Activated T-helper 1 cell treated with anti-CD3 and anti-CD28 coated beads, Interleukin-12 subunit alpha, Interleukin-12 subunit beta, Interleukin-2, Interleukin-4 antibody, amounts not matched to agents 30 ng/mL and 10 ng/mL and 1 ng/mL, durations not matched to agents 14 hours and 24 hours and 36 hours (primary cell): ENCODE measurements at regions of chr15 and their contacts with region 1.

Region 1: GRCh38 chr15:94582369-94582768 is 351.0 kb downstream of the MCTP2 start:
- DNase-seq: peak; percentile 48
- H3K4me3 Mint-ChIP-seq: no peak overlapping the region
- H3K27ac Mint-ChIP-seq: no peak overlapping the region
- H3K4me1 Mint-ChIP-seq: peaks cover 64% of the 10 kb centered on the region
- H3K27me3 Mint-ChIP-seq: peaks cover 61% of the 10 kb centered on the region

Region 2: DNA sequence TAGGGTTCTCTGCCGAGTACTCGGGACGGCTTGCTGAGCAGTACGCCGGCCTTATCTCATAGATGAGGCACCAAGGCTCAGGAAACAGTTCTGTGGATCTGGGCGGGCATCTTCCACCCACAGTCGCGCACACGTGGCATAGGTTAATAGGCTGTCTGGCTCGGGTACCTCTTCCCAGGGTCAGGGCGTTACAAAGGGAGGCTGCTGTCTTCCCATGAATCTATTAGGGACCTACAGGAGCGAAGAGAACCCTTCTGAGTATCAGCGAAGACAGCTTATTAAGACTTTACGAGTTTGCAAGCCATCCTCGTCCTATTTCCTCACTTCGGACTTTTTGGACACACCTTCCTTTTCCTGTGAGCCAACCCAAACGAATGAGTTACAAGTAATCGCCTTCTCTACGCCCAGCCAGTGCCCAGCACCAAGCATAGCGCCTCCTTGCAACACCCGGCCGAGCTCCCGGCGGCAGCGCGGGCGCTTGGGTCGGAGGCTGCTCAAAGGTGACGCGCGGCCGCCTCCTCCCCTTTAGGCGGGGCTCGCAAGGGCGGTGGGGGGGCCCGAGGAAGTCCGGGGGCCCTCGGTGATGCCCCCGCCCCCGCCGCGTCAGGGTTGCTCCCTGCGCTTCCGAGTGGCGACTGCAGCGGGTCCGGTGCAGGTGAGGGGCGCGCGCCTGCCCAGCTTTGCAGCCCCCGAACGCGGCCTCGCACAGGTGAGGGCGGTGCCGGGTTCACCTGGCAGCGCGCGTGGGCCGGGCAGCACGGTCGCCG is 351.2 kb before region 1 on chr15 and contains the start of gene MCTP2:
- intact Hi-C with region 1: loop called (anchors 2 kb)
- DNase-seq: peak; percentile 86
- H3K4me3 Mint-ChIP-seq: peak within 1 kb of the TSS; percentile 88
- H3K27ac Mint-ChIP-seq: peak within 1 kb of the TSS; percentile 99
- H3K4me1 Mint-ChIP-seq: peaks cover 87% of the 10 kb centered on the region
- H3K27me3 Mint-ChIP-seq: no peaks in the 10 kb centered on the region
- total RNA-seq, gene MCTP2: 93.2 and 96.0 TPM in 2 replicates

Region 3: DNA sequence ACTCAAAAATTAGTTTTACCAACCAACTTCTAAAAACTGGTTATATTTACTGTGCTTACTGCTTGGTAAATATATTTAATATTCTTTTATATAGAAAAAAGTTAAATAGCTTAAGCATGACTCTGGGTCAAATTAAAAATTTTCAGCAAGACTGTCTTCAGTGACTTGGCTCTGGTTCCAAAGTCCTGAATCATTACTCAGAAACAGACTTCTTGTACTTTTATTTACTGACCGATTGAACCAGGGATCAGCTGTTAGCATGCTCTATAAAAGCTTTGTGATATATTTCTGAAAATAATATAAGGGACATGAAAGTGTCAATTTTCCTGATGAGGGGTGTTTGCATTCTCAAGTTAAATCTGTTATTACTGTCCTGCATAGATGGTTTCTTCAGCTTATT is 186.7 kb before region 1 on chr15:
- intact Hi-C with region 1: no loop called
- DNase-seq: no peak
- H3K4me3 Mint-ChIP-seq: no peak overlapping the region
- H3K27ac Mint-ChIP-seq: no peak overlapping the region
- H3K4me1 Mint-ChIP-seq: no peaks in the 10 kb centered on the region
- H3K27me3 Mint-ChIP-seq: no peaks in the 10 kb centered on the region

Region 4: GRCh38 chr15:94631608-94632007 is 49.2 kb after region 1 on chr15:
- intact Hi-C with region 1: loop called (anchors 2 kb)
- DNase-seq: no peak
- H3K4me3 Mint-ChIP-seq: peak overlapping the region; percentile 35
- H3K27ac Mint-ChIP-seq: no peak overlapping the region
- H3K4me1 Mint-ChIP-seq: peaks cover 55% of the 10 kb centered on the region
- H3K27me3 Mint-ChIP-seq: peaks cover 33% of the 10 kb centered on the region

Region 5: DNA sequence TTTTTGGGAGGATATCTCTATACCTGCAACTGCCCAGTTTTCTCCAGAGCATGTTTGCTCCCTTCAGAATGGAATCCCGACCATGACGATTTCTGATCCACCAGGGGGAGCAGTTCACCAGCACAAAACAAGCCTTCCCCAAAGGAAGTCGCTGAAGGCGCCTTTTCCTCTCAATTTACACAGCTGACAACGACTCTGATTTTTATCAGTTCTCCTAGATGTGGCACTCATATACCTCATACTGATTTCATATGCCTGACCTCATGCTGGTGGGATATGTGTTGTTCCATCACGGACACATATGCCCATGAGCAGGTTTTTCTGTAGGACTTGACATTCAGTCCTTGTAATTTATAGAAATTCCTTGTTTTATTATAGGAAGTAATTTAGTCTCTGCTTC is 677.1 kb after region 1 on chr15:
- intact Hi-C with region 1: loop called (anchors 10 kb)
- DNase-seq: peak; percentile 49
- H3K4me3 Mint-ChIP-seq: no peak overlapping the region
- H3K27ac Mint-ChIP-seq: no peak overlapping the region
- H3K4me1 Mint-ChIP-seq: peaks cover 12% of the 10 kb centered on the region
- H3K27me3 Mint-ChIP-seq: peaks cover 54% of the 10 kb centered on the region

Region 6: DNA sequence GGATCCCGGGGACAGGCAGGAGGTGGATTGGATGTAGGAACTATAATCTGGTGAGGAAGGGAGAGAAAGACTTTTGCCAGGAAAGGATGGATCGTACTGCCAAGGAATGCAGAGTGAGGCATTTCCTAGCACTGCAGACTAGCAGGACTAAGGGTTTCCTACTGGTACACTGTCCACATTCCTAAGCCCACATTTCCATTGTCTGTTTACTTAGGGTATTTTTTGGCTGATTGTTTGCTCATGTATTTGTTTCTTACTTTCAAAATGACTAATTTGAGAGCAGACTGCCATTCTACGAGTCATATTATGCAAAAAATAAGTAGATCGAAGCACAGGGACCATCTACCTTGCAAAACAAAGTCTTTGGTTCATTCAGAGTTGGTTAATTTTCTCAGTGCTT is 718.6 kb after region 1 on chr15:
- intact Hi-C with region 1: no loop called
- DNase-seq: no peak
- H3K4me3 Mint-ChIP-seq: no peak overlapping the region
- H3K27ac Mint-ChIP-seq: peak overlapping the region; percentile 74
- H3K4me1 Mint-ChIP-seq: peaks cover 47% of the 10 kb centered on the region
- H3K27me3 Mint-ChIP-seq: peaks cover 29% of the 10 kb centered on the region

Region 7: GRCh38 chr15:95446854-95447253 is 864.5 kb after region 1 on chr15:
- intact Hi-C with region 1: loop called (anchors 10 kb)
- DNase-seq: peak; percentile 30
- H3K4me3 Mint-ChIP-seq: peak overlapping the region; percentile 48
- H3K27ac Mint-ChIP-seq: peak overlapping the region; percentile 78
- H3K4me1 Mint-ChIP-seq: peaks cover 27% of the 10 kb centered on the region
- H3K27me3 Mint-ChIP-seq: peaks cover 6% of the 10 kb centered on the region